Endothelial cell of umbilical vein (primary cell): ENCODE measurements at regions of chr4 and their contacts with region 1.

Region 1: DNA sequence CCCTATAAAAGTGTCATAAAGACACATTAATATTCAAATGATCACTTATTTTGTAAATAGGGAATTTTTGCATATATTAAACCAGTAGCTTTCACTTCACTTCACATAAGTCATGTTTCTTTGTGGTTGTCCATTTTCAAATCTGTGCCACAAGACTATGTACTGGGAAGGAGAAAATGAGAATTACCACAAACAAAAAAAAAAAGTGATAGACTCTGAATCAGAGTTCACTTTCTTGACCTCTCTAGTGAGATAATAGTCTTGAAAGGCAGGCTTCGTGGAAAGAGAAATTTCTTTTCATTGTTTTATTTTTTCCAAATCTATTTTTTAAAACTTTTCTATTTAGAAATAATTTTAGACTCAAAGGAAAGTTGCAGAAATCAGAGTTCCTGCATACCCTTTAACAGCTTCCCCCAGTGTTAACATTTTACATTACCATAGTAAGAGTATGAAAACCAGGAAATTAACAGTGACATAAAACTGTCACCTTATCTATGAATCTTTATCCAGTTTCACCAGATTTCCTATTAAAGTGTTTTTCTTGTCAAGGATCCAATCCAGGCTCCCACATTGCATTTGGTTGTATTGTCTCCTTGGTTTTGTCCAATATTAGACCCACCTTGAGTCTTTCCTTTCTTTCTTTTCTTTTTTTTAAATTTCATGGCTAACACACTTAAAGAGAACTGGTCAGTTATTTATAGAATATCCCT is 215.4 kb upstream of the PGRMC2 start:
- DNase-seq: peak; percentile 91
- H3K4me3 ChIP-seq: no peak overlapping the region
- H3K27ac ChIP-seq: peak overlapping the region; percentile 62
- H3K4me1 ChIP-seq: peaks cover 22% of the 10 kb centered on the region
- H3K27me3 ChIP-seq: no peaks in the 10 kb centered on the region
- CTCF ChIP-seq: no peak
- POLR2A ChIP-seq: peak; percentile 69

Region 2: DNA sequence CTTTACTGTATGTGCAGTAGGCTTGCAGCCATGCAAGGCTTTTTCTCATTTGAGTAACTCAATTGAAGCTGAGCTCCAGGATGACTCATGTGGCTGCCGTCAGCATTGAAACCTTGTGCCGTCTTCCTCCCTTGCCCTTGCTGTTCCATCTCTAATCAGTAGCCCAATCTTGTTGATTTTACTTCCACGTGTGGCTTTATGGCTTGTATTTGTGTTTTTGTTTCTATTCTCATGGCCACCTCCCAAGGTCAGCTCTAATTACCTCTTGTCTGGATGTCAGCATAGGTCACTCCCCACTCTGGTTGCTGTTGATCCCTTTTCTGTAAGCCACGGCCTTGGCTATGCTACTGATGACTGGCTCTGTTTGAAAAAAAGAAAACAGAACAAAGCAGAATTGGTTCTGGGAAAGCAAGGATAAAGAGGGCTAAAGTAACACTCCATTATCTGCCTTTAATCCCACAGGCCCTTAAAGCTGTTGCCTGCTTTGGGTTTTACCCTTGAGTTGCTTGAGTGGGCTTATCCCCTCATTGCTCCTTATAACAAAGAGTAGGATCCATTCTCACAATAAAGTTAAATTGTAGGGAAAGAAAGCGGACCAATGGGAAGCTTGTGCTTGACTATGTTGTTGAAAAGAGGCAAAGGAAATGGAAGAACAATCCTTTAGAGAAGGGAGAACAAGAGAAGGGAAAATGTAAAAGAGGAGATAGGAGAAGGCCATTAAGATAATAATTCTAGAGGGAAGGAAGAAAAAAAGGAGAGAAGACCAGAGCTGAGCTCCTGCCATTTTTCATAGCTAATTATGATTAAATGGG is 41.5 kb before region 1 on chr4:
- CTCF ChIA-PET with region 1: no interaction called
- POLR2A ChIA-PET with region 1: no interaction called
- dilution Hi-C with region 1: no loop called
- intact Hi-C with region 1: loop called (anchors 1 kb)
- DNase-seq: peak; percentile 95
- H3K4me3 ChIP-seq: no peak overlapping the region
- H3K27ac ChIP-seq: peak overlapping the region; percentile 76
- H3K4me1 ChIP-seq: peaks cover 12% of the 10 kb centered on the region
- H3K27me3 ChIP-seq: no peaks in the 10 kb centered on the region
- CTCF ChIP-seq: no peak
- POLR2A ChIP-seq: no peak

Region 3: DNA sequence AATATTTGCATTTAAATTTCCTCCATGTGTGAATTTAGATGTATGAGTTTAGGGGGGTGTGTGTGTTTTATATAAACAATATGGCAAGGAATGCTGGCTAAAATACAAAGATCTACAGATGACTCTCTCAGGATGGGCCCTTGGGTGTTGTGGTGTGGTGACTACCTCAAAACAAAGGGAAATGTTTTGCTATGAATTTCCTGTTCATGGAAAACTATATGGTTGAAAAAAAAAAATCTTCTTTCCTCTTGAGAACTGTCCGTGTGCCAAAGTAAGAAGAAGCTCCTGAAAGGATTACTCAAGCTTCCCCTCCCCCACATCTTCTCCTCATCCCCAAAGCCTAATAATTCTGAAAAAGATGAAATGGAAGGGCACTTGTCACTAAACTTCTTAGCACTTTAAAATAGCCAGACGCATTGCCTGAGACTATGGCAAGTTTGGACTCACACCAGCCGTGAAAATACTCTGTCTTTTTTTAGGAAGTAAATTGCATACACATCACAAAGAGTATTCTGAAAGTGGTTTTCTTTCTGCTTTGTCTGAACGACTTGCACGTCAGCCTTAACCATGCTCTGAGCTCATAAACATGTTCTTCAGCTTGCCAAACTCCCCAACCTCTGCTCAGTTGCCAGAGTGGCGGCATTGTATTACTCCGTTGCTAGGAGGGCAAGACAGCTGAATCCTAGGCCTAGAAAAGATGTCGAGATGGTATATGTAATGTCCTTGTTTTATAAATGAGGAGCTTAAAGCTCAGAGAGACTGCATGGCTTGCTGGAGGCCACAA is 56.1 kb after region 1 on chr4:
- CTCF ChIA-PET with region 1: no interaction called
- POLR2A ChIA-PET with region 1: no interaction called
- dilution Hi-C with region 1: no loop called
- intact Hi-C with region 1: no loop called
- DNase-seq: peak; percentile 50
- H3K4me3 ChIP-seq: no peak overlapping the region
- H3K27ac ChIP-seq: no peak overlapping the region
- H3K4me1 ChIP-seq: peaks cover 17% of the 10 kb centered on the region
- H3K27me3 ChIP-seq: no peaks in the 10 kb centered on the region
- CTCF ChIP-seq: no peak
- POLR2A ChIP-seq: no peak

Region 4: DNA sequence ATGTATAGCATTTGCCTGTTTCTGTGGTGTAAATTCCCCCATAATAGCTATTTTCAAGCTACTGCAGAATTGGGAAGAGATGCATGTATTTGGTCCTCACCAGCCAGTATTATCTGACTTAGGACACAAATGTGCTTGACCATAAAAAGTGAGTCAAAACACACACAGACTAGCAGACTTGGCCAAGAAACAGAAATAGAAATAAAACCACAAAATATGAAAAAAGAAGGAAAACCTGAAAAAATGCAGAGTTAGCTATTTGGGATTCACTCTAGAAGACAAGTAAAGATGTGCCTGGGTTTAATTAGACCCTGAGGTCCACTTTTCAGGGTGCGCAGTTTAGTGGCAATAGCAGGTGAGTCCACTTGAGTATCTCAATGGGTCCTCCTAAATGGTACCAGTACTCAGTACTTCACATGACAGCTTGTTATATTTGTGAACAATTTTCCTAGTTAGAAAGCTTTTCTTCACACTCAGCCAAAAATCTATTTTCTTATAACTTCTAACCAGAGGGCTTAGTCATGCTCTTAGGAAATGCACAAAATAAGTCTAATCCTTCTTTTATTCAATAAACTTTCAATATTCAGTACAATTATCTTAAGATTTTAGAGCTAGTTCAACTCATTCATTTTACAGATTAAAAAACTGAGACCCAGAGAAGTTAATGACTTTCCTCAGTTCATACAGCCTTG is 197.8 kb after region 1 on chr4:
- CTCF ChIA-PET with region 1: no interaction called
- POLR2A ChIA-PET with region 1: no interaction called
- dilution Hi-C with region 1: no loop called
- intact Hi-C with region 1: no loop called
- DNase-seq: no peak
- H3K4me3 ChIP-seq: no peak overlapping the region
- H3K27ac ChIP-seq: no peak overlapping the region
- H3K4me1 ChIP-seq: no peaks in the 10 kb centered on the region
- H3K27me3 ChIP-seq: no peaks in the 10 kb centered on the region
- CTCF ChIP-seq: no peak
- POLR2A ChIP-seq: no peak